Caco-2 (cell line): ENCODE measurements at regions of chr2 and their contacts with region 1.

Region 1: DNA sequence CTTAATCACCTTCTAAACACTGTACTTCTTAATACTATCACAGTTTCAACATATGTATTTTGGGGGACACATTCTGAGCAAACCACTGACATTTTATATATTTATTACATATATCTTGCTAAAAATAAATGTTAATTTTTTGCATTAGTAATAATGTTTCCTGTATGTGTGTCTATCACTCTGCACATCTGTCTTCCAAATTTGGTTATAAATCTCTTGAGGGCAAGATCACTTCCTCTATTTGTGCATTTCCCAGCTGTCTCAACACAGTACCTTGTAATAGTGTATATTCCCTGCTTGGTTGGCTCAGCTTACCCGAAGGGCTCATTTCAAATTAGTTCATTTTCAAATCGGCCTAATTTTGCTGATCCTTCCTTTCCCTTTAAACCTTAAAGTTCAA is 617.1 kb upstream of the GYPC start:
- DNase-seq: no peak
- H3K4me3 ChIP-seq: no peak overlapping the region
- H3K4me3 Mint-ChIP-seq: no peak overlapping the region
- H3K27ac Mint-ChIP-seq: no peak overlapping the region
- H3K4me1 ChIP-seq: 0 out of 2 replicates have a peak, but pooled peaks cover 6% of the 10 kb centered on the region
- H3K4me1 Mint-ChIP-seq: no peaks in the 10 kb centered on the region
- H3K27me3 ChIP-seq: no peaks in the 10 kb centered on the region
- H3K27me3 Mint-ChIP-seq: no peaks in the 10 kb centered on the region
- CTCF ChIP-seq: no peak

Region 2: GRCh38 chr2:125243074-125243473 is 795.8 kb before region 1 on chr2:
- CTCF ChIA-PET with region 1: no interaction called
- POLR2A ChIA-PET with region 1: no interaction called
- intact Hi-C with region 1: no loop called
- DNase-seq: no peak
- H3K4me3 ChIP-seq: no peak overlapping the region
- H3K4me3 Mint-ChIP-seq: no peak overlapping the region
- H3K27ac Mint-ChIP-seq: no peak overlapping the region
- H3K4me1 ChIP-seq: no peaks in the 10 kb centered on the region
- H3K4me1 Mint-ChIP-seq: no peaks in the 10 kb centered on the region
- H3K27me3 ChIP-seq: no peaks in the 10 kb centered on the region
- H3K27me3 Mint-ChIP-seq: no peaks in the 10 kb centered on the region
- CTCF ChIP-seq: no peak

Region 3: GRCh38 chr2:125822746-125823145 is 216.1 kb before region 1 on chr2:
- CTCF ChIA-PET with region 1: no interaction called
- POLR2A ChIA-PET with region 1: no interaction called
- intact Hi-C with region 1: no loop called
- DNase-seq: no peak
- H3K4me3 ChIP-seq: no peak overlapping the region
- H3K4me3 Mint-ChIP-seq: no peak overlapping the region
- H3K27ac Mint-ChIP-seq: no peak overlapping the region
- H3K4me1 ChIP-seq: no peaks in the 10 kb centered on the region
- H3K4me1 Mint-ChIP-seq: no peaks in the 10 kb centered on the region
- H3K27me3 ChIP-seq: no peaks in the 10 kb centered on the region
- H3K27me3 Mint-ChIP-seq: no peaks in the 10 kb centered on the region
- CTCF ChIP-seq: no peak

Region 4: DNA sequence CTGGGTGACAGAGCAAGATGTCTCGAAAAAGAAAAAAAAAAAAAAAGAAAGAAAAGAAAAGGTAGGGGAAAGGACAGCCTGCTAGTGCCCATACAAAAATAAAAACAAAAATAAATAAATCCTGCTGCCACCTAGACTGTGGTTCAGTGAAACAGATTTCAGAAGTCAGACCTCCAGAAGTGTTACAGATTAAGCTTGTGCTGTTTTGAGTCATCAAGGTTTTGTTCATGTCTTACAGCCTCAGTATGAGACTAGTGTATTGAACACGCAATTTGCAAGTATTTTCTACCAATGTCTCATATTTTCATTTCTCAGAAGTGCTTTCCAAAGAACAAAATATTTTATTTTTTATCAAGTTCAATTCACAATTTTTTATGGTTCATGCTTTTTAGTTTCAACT is 103.3 kb before region 1 on chr2:
- CTCF ChIA-PET with region 1: no interaction called
- POLR2A ChIA-PET with region 1: no interaction called
- intact Hi-C with region 1: no loop called
- DNase-seq: no peak
- H3K4me3 ChIP-seq: no peak overlapping the region
- H3K4me3 Mint-ChIP-seq: no peak overlapping the region
- H3K27ac Mint-ChIP-seq: no peak overlapping the region
- H3K4me1 ChIP-seq: no peaks in the 10 kb centered on the region
- H3K4me1 Mint-ChIP-seq: no peaks in the 10 kb centered on the region
- H3K27me3 ChIP-seq: no peaks in the 10 kb centered on the region
- H3K27me3 Mint-ChIP-seq: peaks cover 6% of the 10 kb centered on the region
- CTCF ChIP-seq: no peak

Region 5: DNA sequence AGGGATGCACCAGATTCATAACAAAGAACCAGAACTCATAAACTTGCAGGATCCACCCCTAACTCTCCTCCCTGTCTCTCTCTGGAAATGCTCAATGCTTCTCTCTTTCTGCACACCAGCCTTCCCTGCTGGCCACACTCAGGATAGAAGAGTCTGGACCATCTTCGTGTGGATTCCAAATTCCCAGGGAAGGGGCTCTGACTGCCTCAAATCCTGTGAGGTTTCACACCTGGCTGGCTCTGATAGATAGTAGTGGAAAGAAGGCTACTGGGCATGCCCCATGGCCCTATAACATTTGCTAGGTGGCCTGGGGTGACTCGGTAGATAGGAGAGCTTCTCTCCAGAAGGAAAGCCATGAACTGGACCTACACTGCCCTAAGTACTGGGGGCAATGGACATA is 133.9 kb after region 1 on chr2:
- CTCF ChIA-PET with region 1: no interaction called
- POLR2A ChIA-PET with region 1: no interaction called
- intact Hi-C with region 1: loop called (anchors 10 kb)
- DNase-seq: no peak
- H3K4me3 ChIP-seq: no peak overlapping the region
- H3K4me3 Mint-ChIP-seq: no peak overlapping the region
- H3K27ac Mint-ChIP-seq: no peak overlapping the region
- H3K4me1 ChIP-seq: peaks cover 28% of the 10 kb centered on the region
- H3K4me1 Mint-ChIP-seq: no peaks in the 10 kb centered on the region
- H3K27me3 ChIP-seq: no peaks in the 10 kb centered on the region
- H3K27me3 Mint-ChIP-seq: no peaks in the 10 kb centered on the region
- CTCF ChIP-seq: no peak

Region 6: GRCh38 chr2:126358122-126358521 is 319.3 kb after region 1 on chr2:
- CTCF ChIA-PET with region 1: no interaction called
- POLR2A ChIA-PET with region 1: no interaction called
- intact Hi-C with region 1: no loop called
- DNase-seq: no peak
- H3K4me3 ChIP-seq: no peak overlapping the region
- H3K4me3 Mint-ChIP-seq: no peak overlapping the region
- H3K27ac Mint-ChIP-seq: no peak overlapping the region
- H3K4me1 ChIP-seq: no peaks in the 10 kb centered on the region
- H3K4me1 Mint-ChIP-seq: no peaks in the 10 kb centered on the region
- H3K27me3 ChIP-seq: no peaks in the 10 kb centered on the region
- H3K27me3 Mint-ChIP-seq: peaks cover 6% of the 10 kb centered on the region
- CTCF ChIP-seq: no peak